HEK293T (cell line): ENCODE measurements at regions of chr3 and their contacts with region 1.

Region 1: GRCh38 chr3:49539659-49540560 is 14.4 kb upstream of the BSN start:
- DNase-seq: peak; percentile 95

Region 2: DNA sequence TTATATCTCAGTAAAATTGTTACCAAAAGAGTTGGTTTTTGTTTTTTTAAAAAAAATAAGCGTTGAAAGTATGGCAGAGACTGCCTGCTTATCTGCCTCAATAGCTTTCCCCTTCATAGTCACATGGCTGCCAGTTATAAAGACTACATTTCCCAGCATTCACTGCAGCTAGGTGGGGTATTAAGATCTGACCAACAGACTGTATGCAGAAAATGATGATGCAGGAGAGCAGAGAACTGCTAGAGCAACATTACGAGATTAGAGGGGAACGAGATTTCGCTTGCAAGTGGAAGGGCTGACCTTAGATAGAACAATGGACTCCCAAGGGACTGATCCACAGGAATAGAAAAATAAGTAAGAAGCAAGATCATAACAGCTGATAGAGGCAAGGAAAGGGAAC is 142.4 kb before region 1 on chr3:
- CTCF ChIA-PET with region 1: no interaction called
- POLR2A ChIA-PET with region 1: no interaction called
- DNase-seq: peak; percentile 60

Region 3: DNA sequence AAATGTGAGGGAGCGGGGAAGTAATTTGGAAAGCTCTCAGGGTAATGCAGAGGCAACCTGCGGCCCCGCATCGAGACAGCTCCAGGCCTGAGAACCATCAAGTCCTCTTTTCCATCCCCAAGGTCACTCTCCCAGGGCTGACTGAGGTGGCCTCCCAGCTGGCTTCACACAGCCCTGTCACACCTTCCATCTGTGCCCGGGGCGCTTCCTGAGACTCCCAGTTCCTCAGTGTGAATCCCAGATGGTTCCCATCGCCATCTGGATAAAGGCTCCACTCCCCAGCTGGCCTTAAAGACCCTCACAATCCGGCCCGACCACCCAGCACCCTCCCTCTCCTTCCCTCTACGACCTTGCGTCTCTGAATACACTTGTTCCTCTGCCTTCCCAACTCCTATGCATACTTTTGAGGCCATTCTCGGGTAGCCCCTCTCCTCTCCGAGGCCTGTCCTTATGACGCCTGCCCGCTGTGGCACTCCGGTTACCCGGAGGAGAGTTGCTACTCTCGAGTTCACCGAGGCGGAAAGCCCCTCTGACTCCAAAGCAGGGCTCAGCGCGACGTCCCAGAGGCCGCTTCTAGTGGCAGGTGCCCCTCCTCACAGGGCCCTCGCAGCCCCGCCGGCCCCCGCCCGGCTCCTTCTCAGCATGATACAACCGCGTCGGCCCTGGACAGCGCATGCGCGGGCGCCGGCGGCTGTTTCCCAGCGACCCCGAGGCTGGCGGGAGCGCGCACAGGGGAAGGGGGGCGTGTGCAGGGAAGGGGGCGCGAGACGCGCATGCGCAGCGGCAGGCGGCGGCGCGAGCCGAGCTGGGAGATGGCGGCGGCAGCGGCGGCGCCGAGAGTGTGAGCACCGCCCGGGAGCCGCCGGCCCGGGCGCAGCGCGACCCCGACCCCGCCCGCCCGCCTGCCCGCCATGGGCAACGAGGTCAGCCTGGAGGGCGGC is 14.1 kb after region 1 on chr3 and contains the start of gene BSN:
- CTCF ChIA-PET with region 1: interaction called, 5 read pairs
- POLR2A ChIA-PET with region 1: interaction called, 21 read pairs
- DNase-seq: peak; percentile 100

Region 4: GRCh38 chr3:49668414-49668797 is 128.5 kb after region 1 on chr3:
- CTCF ChIA-PET with region 1: interaction called, 36 read pairs
- POLR2A ChIA-PET with region 1: interaction called, 26 read pairs
- DNase-seq: no peak

Region 5: DNA sequence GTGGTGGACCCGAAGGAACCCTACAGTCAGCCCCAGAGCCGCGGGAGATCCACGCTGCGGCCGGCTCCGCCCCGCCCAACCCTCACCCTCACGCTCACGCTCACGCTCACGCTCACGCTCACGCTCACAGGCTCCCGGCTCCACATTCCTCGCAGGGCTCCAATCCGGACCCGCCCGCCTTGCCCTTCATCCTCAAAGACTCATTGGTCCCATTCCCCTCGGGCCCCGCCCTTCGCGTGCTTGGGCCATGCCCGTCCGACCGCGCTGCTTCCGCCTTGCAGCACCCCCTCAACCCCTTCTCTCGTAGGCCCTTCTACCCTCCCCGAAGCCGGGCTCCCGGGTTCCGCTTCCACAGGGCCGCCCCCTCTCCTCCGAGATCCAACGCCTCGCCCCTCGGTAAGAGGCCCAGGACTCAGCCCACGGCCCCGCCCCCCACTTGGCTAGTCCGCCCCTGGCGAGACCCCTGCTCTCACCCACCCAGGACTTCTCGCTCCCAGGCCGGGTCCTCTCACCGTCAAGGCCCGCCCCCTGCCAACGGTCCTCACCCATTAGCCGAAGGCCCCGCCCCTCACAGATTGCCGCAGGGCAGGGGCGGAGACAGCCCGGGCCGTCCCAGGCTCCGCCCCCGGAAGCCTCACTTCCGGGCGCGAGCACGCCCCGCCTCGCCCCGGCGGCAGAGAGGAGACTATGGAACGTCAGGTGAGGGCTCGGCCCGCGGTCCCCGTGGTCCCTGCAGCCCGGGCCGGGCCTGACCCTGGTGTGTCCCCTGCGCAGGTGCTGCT is 134.0 kb after region 1 on chr3 and contains the start of gene APEH:
- CTCF ChIA-PET with region 1: interaction called, 36 read pairs
- POLR2A ChIA-PET with region 1: interaction called, 26 read pairs
- DNase-seq: peak; percentile 98